CD4-positive, alpha-beta T cell (primary cell): ENCODE measurements at regions of chr4 and their contacts with region 1.

Region 1: GRCh38 chr4:20773144-20773997 is 73.1 kb downstream of the PACRGL start:
- DNase-seq: peak in 8 of 14 experiments; percentile 0 to 66 (median 5)
- ATAC-seq: no peak
- H3K4me3 ChIP-seq: no peak overlapping the region
- H3K4me3 Mint-ChIP-seq: no peak overlapping the region
- H3K27ac ChIP-seq: no peak overlapping the region
- H3K27ac Mint-ChIP-seq: no peak overlapping the region
- H3K4me1 ChIP-seq: peaks cover 4% of the 10 kb centered on the region
- H3K4me1 Mint-ChIP-seq: no peaks in the 10 kb centered on the region
- H3K27me3 ChIP-seq: no peaks in the 10 kb centered on the region
- H3K27me3 Mint-ChIP-seq: peaks cover 5% of the 10 kb centered on the region
- CTCF ChIP-seq: peak; percentile 53

Region 2: GRCh38 chr4:20723019-20723418 is 50.4 kb before region 1 on chr4:
- CTCF ChIA-PET with region 1: no interaction called
- POLR2A ChIA-PET with region 1: no interaction called
- intact Hi-C with region 1: no loop called
- DNase-seq: no peak
- ATAC-seq: no peak
- H3K4me3 ChIP-seq: no peak overlapping the region
- H3K4me3 Mint-ChIP-seq: no peak overlapping the region
- H3K27ac ChIP-seq: no peak overlapping the region
- H3K27ac Mint-ChIP-seq: no peak overlapping the region
- H3K4me1 ChIP-seq: no peaks in the 10 kb centered on the region
- H3K4me1 Mint-ChIP-seq: no peaks in the 10 kb centered on the region
- H3K27me3 ChIP-seq: no peaks in the 10 kb centered on the region
- H3K27me3 Mint-ChIP-seq: no peaks in the 10 kb centered on the region
- CTCF ChIP-seq: no peak

Region 3: GRCh38 chr4:21134994-21135393 is 361.6 kb after region 1 on chr4:
- CTCF ChIA-PET with region 1: no interaction called
- POLR2A ChIA-PET with region 1: no interaction called
- intact Hi-C with region 1: loop called in 1 of 2 experiments (anchors 2 kb)
- DNase-seq: peak in 3 of 14 experiments; percentile 24 to 53 (median 45)
- ATAC-seq: no peak
- H3K4me3 ChIP-seq: no peak overlapping the region
- H3K4me3 Mint-ChIP-seq: no peak overlapping the region
- H3K27ac ChIP-seq: no peak overlapping the region
- H3K27ac Mint-ChIP-seq: no peak overlapping the region
- H3K4me1 ChIP-seq: no peaks in the 10 kb centered on the region
- H3K4me1 Mint-ChIP-seq: no peaks in the 10 kb centered on the region
- H3K27me3 ChIP-seq: no peaks in the 10 kb centered on the region
- H3K27me3 Mint-ChIP-seq: no peaks in the 10 kb centered on the region
- CTCF ChIP-seq: no peak

Region 4: GRCh38 chr4:21765810-21766407 is 992.5 kb after region 1 on chr4:
- CTCF ChIA-PET with region 1: no interaction called
- POLR2A ChIA-PET with region 1: no interaction called
- intact Hi-C with region 1: loop called in 1 of 2 experiments (anchors 5 kb)
- DNase-seq: peak in 5 of 14 experiments; percentile 5 to 34 (median 12)
- ATAC-seq: peak; percentile 29
- H3K4me3 ChIP-seq: no peak overlapping the region
- H3K4me3 Mint-ChIP-seq: no peak overlapping the region
- H3K27ac ChIP-seq: no peak overlapping the region
- H3K27ac Mint-ChIP-seq: no peak overlapping the region
- H3K4me1 ChIP-seq: no peaks in the 10 kb centered on the region
- H3K4me1 Mint-ChIP-seq: no peaks in the 10 kb centered on the region
- H3K27me3 ChIP-seq: no peaks in the 10 kb centered on the region
- H3K27me3 Mint-ChIP-seq: no peaks in the 10 kb centered on the region
- CTCF ChIP-seq: peak; percentile 62